ENCODE measurements at regions of chr3 and their contacts with region 1.

Region 1: DNA sequence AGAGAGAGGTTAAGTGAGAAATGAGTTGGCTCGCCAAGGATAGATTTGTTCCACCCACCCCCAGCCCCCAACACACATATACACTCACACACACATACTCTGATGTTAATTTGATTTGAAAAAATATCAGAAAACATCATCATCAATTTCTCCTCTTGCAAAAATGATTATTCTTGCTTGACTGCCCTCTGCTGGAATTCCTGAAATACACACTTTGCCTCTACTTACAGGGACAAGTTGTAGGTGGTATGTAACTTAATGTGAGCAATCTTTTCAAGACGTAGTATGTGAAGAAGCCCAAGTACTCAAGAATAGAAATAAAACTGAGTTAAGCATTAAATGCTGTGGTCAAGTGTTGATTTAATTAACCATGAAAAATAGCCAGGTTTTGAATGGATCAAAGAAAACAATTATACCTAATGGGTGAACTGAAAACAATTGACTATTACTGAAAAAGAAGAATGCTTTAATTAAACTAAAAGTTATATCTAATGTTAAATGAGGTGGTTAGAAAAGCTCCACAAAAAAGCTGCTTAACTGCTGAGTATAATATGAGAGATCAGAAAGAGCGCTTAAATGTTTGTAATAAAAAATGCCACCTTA is 46.6 kb upstream of the MDFIC2 start:
- DNase-seq: peak in 1 of 2 donors; percentile 7
- ATAC-seq: no peak
- H3K4me3 ChIP-seq: no peak overlapping the region
- H3K27ac ChIP-seq: no peak overlapping the region
- H3K4me1 ChIP-seq: no peaks in the 10 kb centered on the region
- H3K27me3 ChIP-seq: no peaks in the 10 kb centered on the region
- CTCF ChIP-seq: peak in 8 of 9 donors; percentile 49 to 71 (median 64)

Region 2: GRCh38 chr3:70064194-70064779 is 294.8 kb before region 1 on chr3:
- intact Hi-C with region 1: loop called in 8 of 10 experiments (anchors 1 to 10 kb)
- DNase-seq: peak in 1 of 2 donors; percentile 11
- ATAC-seq: no peak
- H3K4me3 ChIP-seq: no peak overlapping the region
- H3K27ac ChIP-seq: no peak overlapping the region
- H3K4me1 ChIP-seq: peaks cover 0 to 13% (median 7%) of the 10 kb centered on the region in 9 donors
- H3K27me3 ChIP-seq: peaks cover 0 to 17% (median 0%) of the 10 kb centered on the region in 7 donors
- CTCF ChIP-seq: peak in 8 of 9 donors; percentile 20 to 76 (median 67)

Region 3: DNA sequence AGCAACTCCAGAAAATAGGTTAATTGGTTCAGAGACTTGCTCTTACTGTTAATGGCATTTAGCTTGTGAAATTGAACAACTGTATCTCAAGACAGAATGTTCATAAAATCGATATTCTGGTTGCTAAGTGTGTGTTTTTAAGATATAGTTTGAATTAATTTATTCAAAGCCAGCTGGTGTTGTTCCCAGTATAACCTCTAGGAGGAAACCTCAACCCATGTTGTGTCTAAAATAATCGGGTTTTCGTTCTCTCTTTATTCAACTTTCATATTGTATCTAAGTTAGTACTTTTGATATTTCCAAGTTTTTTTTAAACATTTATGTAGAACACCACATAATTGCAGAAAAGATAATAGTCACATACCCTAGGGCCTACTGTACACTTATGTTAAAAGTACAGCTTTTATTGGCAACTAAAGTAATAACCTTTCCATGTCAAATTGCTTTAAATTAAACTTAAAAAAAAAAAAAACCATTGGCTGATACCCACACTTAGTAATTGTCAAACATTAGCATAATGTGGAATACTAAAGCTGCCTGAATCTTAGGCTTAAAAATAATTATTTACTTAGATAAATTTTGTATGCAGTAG is 268.7 kb before region 1 on chr3:
- intact Hi-C with region 1: loop called in 5 of 10 experiments (anchors 5 to 10 kb)
- DNase-seq: no peak
- ATAC-seq: no peak
- H3K4me3 ChIP-seq: no peak overlapping the region
- H3K27ac ChIP-seq: no peak overlapping the region
- H3K4me1 ChIP-seq: no peaks in the 10 kb centered on the region
- H3K27me3 ChIP-seq: peaks cover 0 to 9% (median 0%) of the 10 kb centered on the region in 7 donors
- CTCF ChIP-seq: peak; percentile 34 to 72 (median 64)

Region 4: GRCh38 chr3:70120357-70121121 is 238.5 kb before region 1 on chr3:
- intact Hi-C with region 1: loop called in 1 of 10 experiments (anchors 5 kb)
- DNase-seq: peak; percentile 23 to 28
- ATAC-seq: no peak
- H3K4me3 ChIP-seq: no peak overlapping the region
- H3K27ac ChIP-seq: no peak overlapping the region
- H3K4me1 ChIP-seq: no peaks in the 10 kb centered on the region
- H3K27me3 ChIP-seq: peaks cover 0 to 5% (median 0%) of the 10 kb centered on the region in 7 donors
- CTCF ChIP-seq: peak in 7 of 9 donors; percentile 33 to 61 (median 42)

Region 5: GRCh38 chr3:70179111-70179510 is 180.0 kb before region 1 on chr3:
- intact Hi-C with region 1: no loop called
- DNase-seq: no peak
- ATAC-seq: no peak
- H3K4me3 ChIP-seq: no peak overlapping the region
- H3K27ac ChIP-seq: no peak overlapping the region
- H3K4me1 ChIP-seq: no peaks in the 10 kb centered on the region
- H3K27me3 ChIP-seq: peaks cover 0 to 10% (median 5%) of the 10 kb centered on the region in 7 donors
- CTCF ChIP-seq: no peak

Region 6: DNA sequence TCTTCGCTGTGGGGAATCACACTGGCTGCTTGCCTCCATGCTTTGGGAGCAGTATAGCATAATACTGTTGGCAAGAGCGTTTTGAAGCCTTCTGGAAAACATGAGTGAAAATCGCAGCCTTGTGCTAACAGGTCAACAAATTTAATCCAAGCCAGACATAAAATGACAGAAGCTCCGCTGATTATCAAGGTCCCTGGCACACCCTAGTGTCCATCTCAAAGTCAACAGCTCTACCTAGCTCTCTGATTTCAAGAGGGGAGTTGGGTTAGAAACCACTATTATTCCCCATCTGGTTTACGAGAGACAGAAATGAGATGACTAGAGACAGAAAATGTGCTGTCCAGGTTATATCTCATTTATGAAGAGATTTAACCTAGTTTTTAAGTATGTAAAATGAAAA is 27.0 kb after region 1 on chr3:
- intact Hi-C with region 1: no loop called
- DNase-seq: no peak
- ATAC-seq: no peak
- H3K4me3 ChIP-seq: no peak overlapping the region
- H3K27ac ChIP-seq: no peak overlapping the region
- H3K4me1 ChIP-seq: no peaks in the 10 kb centered on the region
- H3K27me3 ChIP-seq: no peaks in the 10 kb centered on the region
- CTCF ChIP-seq: no peak

Region 7: GRCh38 chr3:70531063-70531657 is 172.1 kb after region 1 on chr3:
- intact Hi-C with region 1: no loop called
- DNase-seq: no peak
- ATAC-seq: no peak
- H3K4me3 ChIP-seq: no peak overlapping the region
- H3K27ac ChIP-seq: no peak overlapping the region
- H3K4me1 ChIP-seq: no peaks in the 10 kb centered on the region
- H3K27me3 ChIP-seq: peaks cover 0 to 10% (median 4%) of the 10 kb centered on the region in 7 donors
- CTCF ChIP-seq: peak in 8 of 9 donors; percentile 31 to 70 (median 58)